RWPE1 (cell line): ENCODE measurements at regions of chr1 and their contacts with region 1.

Region 1: GRCh38 chr1:183318433-183318832 is 99.7 kb downstream of the NMNAT2 start:
- DNase-seq: peak; percentile 74
- H3K27ac ChIP-seq: peak overlapping the region; percentile 26
- CTCF ChIP-seq: peak; percentile 73

Region 2: DNA sequence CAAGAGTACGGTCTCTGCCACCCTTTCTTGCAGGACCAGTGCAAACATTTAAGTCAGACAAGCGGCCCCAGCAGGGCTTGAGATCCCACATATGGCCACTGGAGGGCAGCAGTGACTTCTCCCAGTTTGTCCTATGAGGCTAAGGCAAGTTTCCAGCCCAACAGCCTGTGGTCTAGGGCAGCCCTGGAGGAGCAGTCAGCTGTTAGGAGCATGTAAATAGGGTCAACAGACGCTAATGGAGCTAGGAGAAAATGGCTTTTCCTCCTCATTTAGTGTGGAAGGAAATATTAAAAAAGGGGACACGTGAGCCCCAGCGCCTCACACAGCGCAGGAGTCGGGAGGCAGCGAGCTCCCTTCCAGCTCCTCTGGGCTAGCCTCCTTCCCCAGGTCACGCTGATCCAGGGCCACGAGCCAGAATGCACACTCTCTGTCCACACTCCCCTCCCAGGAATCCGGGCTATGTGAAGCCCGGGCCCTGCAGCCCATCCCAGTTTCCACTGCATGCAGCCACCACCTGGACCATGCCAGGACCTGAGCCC is 36.8 kb before region 1 on chr1:
- CTCF ChIA-PET with region 1: interaction called, 36 read pairs
- POLR2A ChIA-PET with region 1: no interaction called
- DNase-seq: peak; percentile 77
- H3K27ac ChIP-seq: peak overlapping the region; percentile 94
- CTCF ChIP-seq: peak; percentile 91